A673 (cell line): ENCODE measurements at regions of chr15 and their contacts with region 1.

Region 1: DNA sequence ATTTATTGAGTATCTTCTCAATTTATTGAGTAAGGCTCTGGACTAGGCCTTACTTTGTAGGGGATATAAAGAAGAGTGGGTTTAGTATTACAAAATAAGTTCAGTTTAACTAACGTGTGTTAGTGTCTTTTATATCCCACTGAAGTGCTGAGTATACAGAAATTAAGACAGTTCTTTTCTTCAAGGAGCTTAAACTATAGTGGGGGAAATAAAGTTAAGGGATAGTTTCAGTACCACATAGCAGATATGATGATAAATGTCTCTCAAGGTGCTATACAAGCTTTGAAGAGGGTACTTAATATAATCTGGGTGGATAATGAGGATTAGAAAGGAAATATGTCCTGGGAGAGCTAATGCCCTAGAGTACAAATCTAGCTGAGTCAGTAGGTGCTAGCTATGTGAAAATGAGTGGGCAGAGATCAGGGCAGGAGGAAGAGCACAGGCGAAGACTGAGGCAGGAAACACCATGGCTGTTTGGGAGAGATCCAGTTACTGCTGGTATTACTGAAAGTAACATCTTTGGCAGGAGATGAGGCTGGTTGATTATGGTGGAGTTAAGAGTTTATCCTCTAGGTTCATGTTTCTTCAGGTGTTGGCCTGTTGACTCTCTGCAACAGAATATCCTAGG is 46.0 kb downstream of the TEX9 start:
- DNase-seq: peak; percentile 24
- H3K4me3 ChIP-seq: no peak overlapping the region
- H3K27ac ChIP-seq: no peak overlapping the region
- H3K4me1 ChIP-seq: no peaks in the 10 kb centered on the region
- H3K27me3 ChIP-seq: no peaks in the 10 kb centered on the region
- CTCF ChIP-seq: no peak

Region 2: DNA sequence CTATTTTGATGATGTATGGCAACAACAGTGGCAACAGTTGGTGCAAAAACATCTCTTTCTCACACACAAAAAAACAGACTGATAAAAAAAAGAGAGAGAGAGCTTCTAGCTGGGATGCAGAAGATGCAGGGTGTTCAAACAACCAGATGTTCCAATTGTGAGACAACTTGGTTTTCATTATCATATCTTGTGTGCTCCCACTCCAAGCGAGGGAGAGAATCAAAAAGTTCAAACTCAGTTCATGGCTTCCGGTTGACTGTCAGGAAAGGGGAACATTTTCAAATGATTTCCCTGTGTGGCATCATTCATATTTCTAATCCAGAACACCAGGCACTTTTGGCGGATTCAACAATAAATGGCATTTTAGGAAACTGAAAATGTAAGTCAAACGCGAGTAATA is 1286.6 kb before region 1 on chr15:
- CTCF ChIA-PET with region 1: no interaction called
- POLR2A ChIA-PET with region 1: no interaction called
- intact Hi-C with region 1: no loop called
- DNase-seq: no peak
- H3K4me3 ChIP-seq: no peak overlapping the region
- H3K27ac ChIP-seq: no peak overlapping the region
- H3K4me1 ChIP-seq: no peaks in the 10 kb centered on the region
- H3K27me3 ChIP-seq: no peaks in the 10 kb centered on the region
- CTCF ChIP-seq: no peak

Region 3: GRCh38 chr15:56365075-56365711 is 46.0 kb before region 1 on chr15 and contains the start of gene TEX9:
- CTCF ChIA-PET with region 1: no interaction called
- POLR2A ChIA-PET with region 1: no interaction called
- intact Hi-C with region 1: loop called (anchors 1 kb)
- DNase-seq: peak; percentile 93
- H3K4me3 ChIP-seq: peak within 1 kb of the TSS; percentile 61
- H3K27ac ChIP-seq: peak within 1 kb of the TSS; percentile 61
- H3K4me1 ChIP-seq: peaks cover 11% of the 10 kb centered on the region
- H3K27me3 ChIP-seq: no peaks in the 10 kb centered on the region
- CTCF ChIP-seq: no peak
- total RNA-seq, gene TEX9: 18.0 TPM in 2 replicates

Region 4: DNA sequence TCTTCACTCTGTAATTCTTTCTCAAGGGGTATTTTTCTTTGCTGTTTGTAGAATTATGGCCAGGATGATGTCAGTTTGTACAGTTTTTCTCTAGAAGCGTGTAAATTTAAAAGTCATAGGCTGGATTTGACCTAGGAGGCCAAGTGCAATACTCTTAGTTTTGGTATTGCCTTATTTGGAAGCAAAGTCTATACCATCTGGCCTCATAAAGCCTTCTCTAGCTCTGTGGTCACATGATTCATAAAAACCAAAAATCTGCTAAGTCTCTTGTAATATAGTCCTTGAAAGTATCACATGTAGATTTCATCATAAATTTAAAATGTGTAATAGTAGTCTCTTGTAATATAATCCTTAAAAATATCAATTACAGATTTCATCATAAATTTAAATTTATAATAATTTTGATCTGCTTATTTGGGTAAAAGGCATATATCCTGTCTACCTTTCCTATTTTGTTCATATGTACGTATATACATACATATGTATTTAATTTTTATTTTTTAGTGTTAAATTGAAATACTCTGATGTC is 20.4 kb before region 1 on chr15:
- CTCF ChIA-PET with region 1: no interaction called
- POLR2A ChIA-PET with region 1: no interaction called
- intact Hi-C with region 1: no loop called
- DNase-seq: no peak
- H3K4me3 ChIP-seq: no peak overlapping the region
- H3K27ac ChIP-seq: no peak overlapping the region
- H3K4me1 ChIP-seq: no peaks in the 10 kb centered on the region
- H3K27me3 ChIP-seq: no peaks in the 10 kb centered on the region
- CTCF ChIP-seq: no peak

Region 5: DNA sequence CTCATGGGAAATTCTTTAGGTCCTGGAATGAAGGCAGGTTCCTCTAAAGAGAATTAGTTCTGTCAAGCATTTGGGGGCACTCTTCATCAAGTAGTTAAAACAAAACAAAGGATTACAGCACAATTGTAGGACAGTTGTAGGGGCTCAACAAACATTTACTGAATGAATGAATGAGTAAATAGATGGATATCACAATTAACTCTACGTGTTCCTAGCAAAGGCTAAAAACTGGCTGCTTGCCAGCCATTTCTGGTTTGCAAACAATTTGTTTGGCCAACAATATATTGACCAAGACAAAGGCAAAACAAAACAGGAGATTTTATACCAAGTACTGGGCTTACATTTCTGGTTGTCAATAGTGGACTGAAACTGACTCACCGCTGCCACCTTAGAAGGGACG is 205.3 kb after region 1 on chr15:
- CTCF ChIA-PET with region 1: no interaction called
- POLR2A ChIA-PET with region 1: no interaction called
- intact Hi-C with region 1: no loop called
- DNase-seq: no peak
- H3K4me3 ChIP-seq: no peak overlapping the region
- H3K27ac ChIP-seq: no peak overlapping the region
- H3K4me1 ChIP-seq: peaks cover 5% of the 10 kb centered on the region
- H3K27me3 ChIP-seq: no peaks in the 10 kb centered on the region
- CTCF ChIP-seq: no peak